ENCODE measurements at regions of chr9 and their contacts with region 1.

Region 1: DNA sequence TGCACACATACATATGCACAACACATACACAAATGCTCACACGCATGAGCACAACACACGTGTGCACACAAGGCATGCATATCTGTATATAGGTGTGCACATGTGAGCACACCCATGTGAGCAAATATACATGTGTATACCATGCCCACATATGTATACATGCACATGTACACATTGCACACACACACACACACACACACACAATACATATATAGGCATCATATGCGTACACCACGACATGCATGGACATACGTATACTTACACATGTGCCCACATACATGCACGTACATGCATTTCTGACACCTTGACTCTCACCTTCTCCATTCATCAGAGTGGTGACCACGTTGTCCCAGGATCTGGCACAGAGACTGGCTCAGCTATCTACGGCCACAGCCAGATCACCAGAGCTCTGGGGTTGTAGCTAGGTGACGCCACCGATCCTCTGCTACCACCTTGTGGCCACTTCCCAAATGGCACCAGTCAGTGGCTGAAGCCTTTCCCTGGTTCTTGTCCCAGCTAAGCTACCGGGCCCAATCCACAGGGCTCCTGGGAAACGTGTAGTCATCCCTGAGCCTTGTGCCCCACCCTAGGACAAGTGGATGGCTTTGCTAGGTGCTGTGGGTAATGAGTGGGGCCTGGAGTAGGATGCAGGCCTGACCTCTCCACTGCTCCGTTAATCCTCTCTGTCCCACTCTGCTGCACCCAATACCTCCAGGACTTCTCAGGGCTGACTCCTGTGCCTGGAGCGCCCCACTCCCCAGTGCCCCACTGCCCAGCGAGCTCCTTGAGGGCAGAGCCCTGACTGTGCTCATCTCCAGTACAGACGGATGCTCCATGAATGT is 194.4 kb downstream of the RGS3 start:
- DNase-seq: peak; percentile 78 to 89
- ATAC-seq: peak; percentile 85 to 98 (median 94)
- H3K4me3 ChIP-seq: no peak overlapping the region
- H3K4me3 Mint-ChIP-seq: no peak overlapping the region
- H3K27ac ChIP-seq: no peak overlapping the region
- H3K27ac Mint-ChIP-seq: peak overlapping the region in 1 of 2 donors; percentile 67
- H3K4me1 ChIP-seq: peaks cover 32% of the 10 kb centered on the region
- H3K4me1 Mint-ChIP-seq: peaks cover 9 to 23% of the 10 kb centered on the region in 2 donors
- H3K27me3 ChIP-seq: no peaks in the 10 kb centered on the region
- H3K27me3 Mint-ChIP-seq: peaks cover 20% of the 10 kb centered on the region in 2 donors
- CTCF ChIP-seq: peak; percentile 85

Region 2: DNA sequence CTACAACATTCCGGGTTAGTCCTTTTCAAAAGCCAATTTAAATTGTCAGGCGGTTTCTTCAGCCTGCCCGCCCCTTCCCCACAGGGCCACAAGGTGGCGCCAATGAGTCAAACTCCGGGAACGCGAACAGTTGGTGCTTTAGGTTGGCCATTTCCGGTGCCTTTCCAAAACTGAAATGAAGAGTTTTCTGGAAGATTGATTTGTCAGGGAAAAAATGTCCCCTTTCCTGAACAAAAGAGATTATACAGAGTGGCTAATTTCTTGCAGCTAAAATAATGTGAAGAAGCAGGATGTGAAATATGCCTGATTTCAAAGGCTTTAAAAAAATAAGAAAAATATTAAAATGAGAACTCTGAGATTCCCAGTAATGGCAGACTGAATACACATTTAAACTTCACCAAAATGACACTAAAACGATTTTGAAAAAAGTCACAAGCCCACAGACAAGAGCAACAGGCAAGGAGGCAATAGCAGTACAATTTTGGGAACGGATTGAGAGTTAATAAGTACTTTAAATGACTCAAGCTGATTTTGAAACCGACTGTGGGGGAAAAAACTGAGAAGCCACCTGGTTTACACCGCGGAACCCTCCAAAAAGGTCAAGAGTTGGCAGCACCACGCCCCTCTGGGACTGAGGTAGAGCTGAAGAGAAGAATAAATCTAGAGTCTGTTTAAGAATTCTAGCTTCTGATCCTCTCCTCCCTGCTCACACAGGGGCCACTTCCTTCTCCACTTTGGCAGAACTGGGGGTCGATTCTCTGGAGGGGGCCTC is 813.0 kb before region 1 on chr9:
- intact Hi-C with region 1: loop called (anchors 5 kb)
- DNase-seq: peak; percentile 73 to 80
- ATAC-seq: peak; percentile 72 to 88 (median 81)
- H3K4me3 ChIP-seq: no peak overlapping the region
- H3K4me3 Mint-ChIP-seq: peak overlapping the region; percentile 47
- H3K27ac ChIP-seq: no peak overlapping the region
- H3K27ac Mint-ChIP-seq: peak overlapping the region in 1 of 2 donors; percentile 0
- H3K4me1 ChIP-seq: peaks cover 14% of the 10 kb centered on the region
- H3K4me1 Mint-ChIP-seq: peaks cover 10 to 26% of the 10 kb centered on the region in 2 donors
- H3K27me3 ChIP-seq: no peaks in the 10 kb centered on the region
- H3K27me3 Mint-ChIP-seq: peaks cover 0 to 2% of the 10 kb centered on the region in 2 donors
- CTCF ChIP-seq: peak; percentile 98

Region 3: GRCh38 chr9:113275157-113276131 is 382.5 kb before region 1 on chr9 and contains the starts of genes CDC26 and PRPF4:
- intact Hi-C with region 1: loop called (anchors 1 kb)
- DNase-seq: peak; percentile 92 to 99
- ATAC-seq: peak; percentile 94 to 99 (median 97)
- H3K4me3 ChIP-seq: peak within 1 kb of the TSS; percentile 89
- H3K4me3 Mint-ChIP-seq: no peak within 1 kb of the TSS
- H3K27ac ChIP-seq: peak within 1 kb of the TSS; percentile 95
- H3K27ac Mint-ChIP-seq: no peak within 1 kb of the TSS
- H3K4me1 ChIP-seq: peaks cover 8% of the 10 kb centered on the region
- H3K4me1 Mint-ChIP-seq: peaks cover 8 to 15% of the 10 kb centered on the region in 2 donors
- H3K27me3 ChIP-seq: no peaks in the 10 kb centered on the region
- H3K27me3 Mint-ChIP-seq: no peaks in the 10 kb centered on the region
- CTCF ChIP-seq: no peak
- total RNA-seq, gene CDC26: 16.8 to 24.8 (median 21.5) TPM
- total RNA-seq, gene PRPF4: 16.9 to 23.2 (median 21.1) TPM

Region 4: DNA sequence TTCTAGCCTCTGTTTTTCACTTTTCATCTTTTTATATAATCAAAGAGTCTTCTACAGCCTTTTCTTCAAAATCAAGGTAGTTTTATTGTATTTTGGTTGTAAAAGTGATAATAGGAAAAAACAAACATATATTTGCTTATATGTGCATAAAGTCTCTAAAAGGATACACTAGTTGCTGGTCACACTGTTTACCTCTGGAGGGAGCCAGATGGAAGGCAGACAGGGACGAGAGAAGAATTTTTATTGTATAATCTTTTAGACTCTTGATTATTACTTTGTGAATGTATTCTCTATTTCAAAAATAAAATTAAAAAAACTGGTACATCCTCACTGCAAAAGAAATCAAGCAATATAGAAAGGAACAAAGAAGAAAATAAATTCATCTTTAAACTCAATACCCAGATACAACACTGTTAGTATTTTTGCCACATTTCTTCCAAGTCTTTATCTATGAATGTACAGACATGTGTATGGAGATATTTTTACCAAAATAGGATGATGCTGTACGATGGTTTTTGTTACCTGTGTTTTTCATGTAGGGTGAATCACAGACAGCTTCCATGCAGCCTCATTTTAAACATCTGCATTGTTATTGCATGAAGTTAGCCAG is 348.6 kb before region 1 on chr9:
- intact Hi-C with region 1: loop called (anchors 1 kb)
- DNase-seq: peak in 1 of 2 donors; percentile 63
- ATAC-seq: peak; percentile 58 to 72 (median 62)
- H3K4me3 ChIP-seq: no peak overlapping the region
- H3K4me3 Mint-ChIP-seq: no peak overlapping the region
- H3K27ac ChIP-seq: no peak overlapping the region
- H3K27ac Mint-ChIP-seq: no peak overlapping the region
- H3K4me1 ChIP-seq: no peaks in the 10 kb centered on the region
- H3K4me1 Mint-ChIP-seq: no peaks in the 10 kb centered on the region
- H3K27me3 ChIP-seq: no peaks in the 10 kb centered on the region
- H3K27me3 Mint-ChIP-seq: peaks cover 0 to 2% of the 10 kb centered on the region in 2 donors
- CTCF ChIP-seq: peak; percentile 52

Region 5: GRCh38 chr9:113401027-113401792 is 256.7 kb before region 1 on chr9 and contains the start of gene ALAD:
- intact Hi-C with region 1: loop called (anchors 1 kb)
- DNase-seq: peak; percentile 99
- ATAC-seq: peak; percentile 98 to 100 (median 99)
- H3K4me3 ChIP-seq: peak within 1 kb of the TSS; percentile 88
- H3K4me3 Mint-ChIP-seq: peak within 1 kb of the TSS; percentile 97
- H3K27ac ChIP-seq: peak within 1 kb of the TSS; percentile 56
- H3K27ac Mint-ChIP-seq: peak within 1 kb of the TSS; percentile 66 to 90
- H3K4me1 ChIP-seq: peaks cover 16% of the 10 kb centered on the region
- H3K4me1 Mint-ChIP-seq: peaks cover 6 to 27% of the 10 kb centered on the region in 2 donors
- H3K27me3 ChIP-seq: no peaks in the 10 kb centered on the region
- H3K27me3 Mint-ChIP-seq: no peaks in the 10 kb centered on the region
- CTCF ChIP-seq: peak; percentile 96
- total RNA-seq, gene ALAD: 30.3 to 38.7 (median 36.4) TPM

Region 6: GRCh38 chr9:113446323-113446740 is 211.6 kb before region 1 on chr9:
- intact Hi-C with region 1: loop called (anchors 2 kb)
- DNase-seq: peak in 1 of 2 donors; percentile 68
- ATAC-seq: peak in 2 of 3 donors; percentile 52 to 66
- H3K4me3 ChIP-seq: no peak overlapping the region
- H3K4me3 Mint-ChIP-seq: no peak overlapping the region
- H3K27ac ChIP-seq: no peak overlapping the region
- H3K27ac Mint-ChIP-seq: no peak overlapping the region
- H3K4me1 ChIP-seq: no peaks in the 10 kb centered on the region
- H3K4me1 Mint-ChIP-seq: peaks cover 0 to 5% of the 10 kb centered on the region in 2 donors
- H3K27me3 ChIP-seq: no peaks in the 10 kb centered on the region
- H3K27me3 Mint-ChIP-seq: no peaks in the 10 kb centered on the region
- CTCF ChIP-seq: peak; percentile 82

Region 7: GRCh38 chr9:113591001-113591898 is 66.7 kb before region 1 on chr9:
- intact Hi-C with region 1: loop called (anchors 1 kb)
- DNase-seq: peak; percentile 52 to 66
- ATAC-seq: peak; percentile 58 to 65 (median 59)
- H3K4me3 ChIP-seq: no peak overlapping the region
- H3K4me3 Mint-ChIP-seq: peak overlapping the region; percentile 28
- H3K27ac ChIP-seq: peak overlapping the region; percentile 21
- H3K27ac Mint-ChIP-seq: peak overlapping the region; percentile 89 to 93
- H3K4me1 ChIP-seq: peaks cover 65% of the 10 kb centered on the region
- H3K4me1 Mint-ChIP-seq: peaks cover 52 to 73% of the 10 kb centered on the region in 2 donors
- H3K27me3 ChIP-seq: no peaks in the 10 kb centered on the region
- H3K27me3 Mint-ChIP-seq: no peaks in the 10 kb centered on the region
- CTCF ChIP-seq: peak; percentile 69

Region 8: DNA sequence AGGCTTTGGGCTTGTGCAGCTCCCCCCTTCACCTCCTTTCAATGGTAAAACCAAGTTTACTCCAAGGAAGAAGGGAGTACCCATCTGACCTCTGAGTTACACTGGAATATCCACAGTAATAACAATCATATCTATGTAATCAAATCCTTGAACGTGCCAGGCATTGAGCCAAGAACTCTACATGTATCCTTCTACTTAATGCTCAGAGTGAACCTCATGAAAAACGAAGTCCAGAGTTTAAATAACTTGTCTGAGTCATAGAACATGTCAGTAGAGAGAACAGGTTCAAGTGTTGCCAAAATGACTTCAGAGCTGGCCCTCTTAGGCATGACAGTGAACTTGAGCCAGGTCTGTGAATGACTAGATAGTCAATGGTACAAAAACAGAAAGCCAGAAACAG is 54.1 kb after region 1 on chr9:
- intact Hi-C with region 1: no loop called
- DNase-seq: no peak
- ATAC-seq: no peak
- H3K4me3 ChIP-seq: no peak overlapping the region
- H3K4me3 Mint-ChIP-seq: no peak overlapping the region
- H3K27ac ChIP-seq: no peak overlapping the region
- H3K27ac Mint-ChIP-seq: no peak overlapping the region
- H3K4me1 ChIP-seq: no peaks in the 10 kb centered on the region
- H3K4me1 Mint-ChIP-seq: peaks cover 9 to 26% of the 10 kb centered on the region in 2 donors
- H3K27me3 ChIP-seq: no peaks in the 10 kb centered on the region
- H3K27me3 Mint-ChIP-seq: no peaks in the 10 kb centered on the region
- CTCF ChIP-seq: no peak